Activated T-helper 2 cell treated with anti-CD3 and anti-CD28 coated beads, Interferon-gamma antibody, Interleukin-2, Interleukin-4, amounts not matched to agents 10 μg/mL and 5 μg/mL and 100 μg/mL, durations not matched to agents 14 hours and 24 hours and 36 hours (primary cell): ENCODE measurements at regions of chr15 and their contacts with region 1.

Region 1: DNA sequence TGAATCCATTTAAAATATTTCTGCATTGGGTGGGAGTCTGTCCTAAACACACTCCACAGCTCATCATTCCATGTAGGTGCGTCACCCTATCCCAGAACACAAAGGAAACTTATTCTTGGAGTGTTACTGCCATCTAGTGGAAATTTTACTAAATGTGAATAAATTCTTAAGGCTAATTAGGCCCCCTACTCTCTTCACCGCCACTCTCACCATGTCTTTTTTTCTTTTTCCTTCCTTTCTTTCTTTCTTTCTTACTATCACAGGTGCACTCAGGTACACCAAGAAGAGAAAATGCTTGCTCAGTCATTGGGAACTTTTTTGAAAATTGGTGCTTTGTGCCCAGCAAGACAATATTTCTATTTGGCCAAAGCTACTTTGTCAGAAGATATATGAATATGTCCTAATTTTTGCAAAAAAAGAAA is 26.4 kb upstream of the ATP8B4 start:
- DNase-seq: no peak
- H3K4me3 Mint-ChIP-seq: no peak overlapping the region
- H3K27ac Mint-ChIP-seq: no peak overlapping the region
- H3K4me1 Mint-ChIP-seq: peaks cover 43% of the 10 kb centered on the region
- H3K27me3 Mint-ChIP-seq: no peaks in the 10 kb centered on the region

Region 2: DNA sequence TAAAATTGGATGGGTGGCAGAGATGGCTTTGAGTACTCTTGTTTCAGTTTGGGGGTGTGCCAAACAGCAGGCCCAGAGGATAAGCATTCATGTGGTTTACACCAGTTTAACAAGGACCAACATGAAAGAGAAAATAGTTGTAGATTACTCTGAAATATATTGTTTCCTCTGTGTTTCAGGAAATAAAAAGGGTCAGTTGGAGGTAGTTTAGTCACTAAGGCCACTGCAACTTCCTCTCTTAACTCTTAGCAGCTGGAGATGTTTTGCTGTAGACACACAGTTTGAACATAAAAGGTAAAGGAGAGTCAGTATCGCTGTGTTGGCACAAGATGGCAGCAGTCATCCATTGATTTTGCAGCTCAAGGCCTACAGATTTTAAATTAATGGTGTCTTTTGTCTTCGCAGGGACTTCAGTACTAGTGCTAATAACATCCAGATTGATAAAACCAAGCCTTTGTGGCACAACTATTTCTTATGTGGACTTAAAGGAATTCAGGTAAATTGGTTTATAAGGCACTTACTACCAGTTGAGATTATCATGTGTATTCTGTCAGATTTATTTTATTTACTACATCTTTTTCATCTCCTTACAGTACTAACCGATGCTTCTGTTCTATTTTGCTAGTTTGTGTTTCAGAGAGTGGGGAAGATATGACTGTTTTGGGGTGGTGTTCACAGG is 909.9 kb before region 1 on chr15:
- intact Hi-C with region 1: loop called (anchors 1 kb)
- DNase-seq: peak; percentile 42
- H3K4me3 Mint-ChIP-seq: no peak overlapping the region
- H3K27ac Mint-ChIP-seq: peak overlapping the region; percentile 14
- H3K4me1 Mint-ChIP-seq: peaks cover 20% of the 10 kb centered on the region
- H3K27me3 Mint-ChIP-seq: no peaks in the 10 kb centered on the region

Region 3: GRCh38 chr15:49421991-49422390 is 723.5 kb before region 1 on chr15:
- intact Hi-C with region 1: loop called (anchors 5 kb)
- DNase-seq: no peak
- H3K4me3 Mint-ChIP-seq: no peak overlapping the region
- H3K27ac Mint-ChIP-seq: peak overlapping the region; percentile 0
- H3K4me1 Mint-ChIP-seq: peaks cover 4% of the 10 kb centered on the region
- H3K27me3 Mint-ChIP-seq: peaks cover 17% of the 10 kb centered on the region

Region 4: GRCh38 chr15:49468440-49468839 is 677.0 kb before region 1 on chr15:
- intact Hi-C with region 1: loop called (anchors 10 kb)
- DNase-seq: no peak
- H3K4me3 Mint-ChIP-seq: no peak overlapping the region
- H3K27ac Mint-ChIP-seq: no peak overlapping the region
- H3K4me1 Mint-ChIP-seq: peaks cover 10% of the 10 kb centered on the region
- H3K27me3 Mint-ChIP-seq: no peaks in the 10 kb centered on the region

Region 5: GRCh38 chr15:50182219-50183013 is 37.0 kb after region 1 on chr15:
- intact Hi-C with region 1: loop called (anchors 2 kb)
- DNase-seq: peak; percentile 53
- H3K4me3 Mint-ChIP-seq: peak overlapping the region; percentile 98
- H3K27ac Mint-ChIP-seq: peak overlapping the region; percentile 96
- H3K4me1 Mint-ChIP-seq: peaks cover 44% of the 10 kb centered on the region
- H3K27me3 Mint-ChIP-seq: no peaks in the 10 kb centered on the region

Region 6: GRCh38 chr15:50315814-50316630 is 170.6 kb after region 1 on chr15:
- intact Hi-C with region 1: loop called (anchors 5 kb)
- DNase-seq: no peak
- H3K4me3 Mint-ChIP-seq: no peak overlapping the region
- H3K27ac Mint-ChIP-seq: no peak overlapping the region
- H3K4me1 Mint-ChIP-seq: peaks cover 34% of the 10 kb centered on the region
- H3K27me3 Mint-ChIP-seq: no peaks in the 10 kb centered on the region